ENCODE measurements at regions of chr11 and their contacts with region 1.

Region 1: DNA sequence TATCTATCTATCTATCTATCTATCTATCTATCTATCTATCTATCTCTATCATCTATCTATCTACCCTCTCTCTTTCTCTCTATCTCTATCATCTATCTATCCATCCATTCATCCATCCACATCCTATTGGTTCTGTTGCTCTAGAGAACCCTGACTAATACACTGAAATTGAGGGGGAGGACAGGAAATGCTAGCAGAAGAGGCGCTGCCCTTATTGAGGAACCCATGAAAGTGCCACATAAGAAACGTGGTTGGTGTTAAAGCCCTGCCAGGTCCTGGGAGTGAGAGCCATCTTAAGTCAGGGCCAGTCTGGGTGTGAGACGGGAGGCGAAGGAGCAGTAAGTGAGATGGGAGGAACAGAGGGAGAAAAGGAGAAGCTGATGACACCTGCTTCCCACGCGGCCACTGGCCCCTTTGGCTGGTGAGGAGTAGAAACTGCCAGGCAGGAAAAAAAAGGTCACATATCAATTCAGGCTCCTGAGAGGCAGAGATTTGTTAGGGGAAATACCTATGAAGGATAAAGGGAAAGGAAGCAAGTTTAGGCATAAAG is 87.9 kb upstream of the PLET1 start:
- DNase-seq: no peak
- ATAC-seq: peak; percentile 65
- H3K4me3 Mint-ChIP-seq: no peak overlapping the region
- H3K27ac Mint-ChIP-seq: no peak overlapping the region
- H3K4me1 Mint-ChIP-seq: peaks cover 6% of the 10 kb centered on the region
- H3K27me3 Mint-ChIP-seq: no peaks in the 10 kb centered on the region

Region 2: GRCh38 chr11:112302231-112302732 is 46.3 kb before region 1 on chr11:
- CTCF ChIA-PET with region 1: no interaction called
- POLR2A ChIA-PET with region 1: no interaction called
- intact Hi-C with region 1: no loop called
- DNase-seq: no peak
- ATAC-seq: no peak
- H3K4me3 Mint-ChIP-seq: no peak overlapping the region
- H3K27ac Mint-ChIP-seq: peak overlapping the region; percentile 51
- H3K4me1 Mint-ChIP-seq: peaks cover 26% of the 10 kb centered on the region
- H3K27me3 Mint-ChIP-seq: no peaks in the 10 kb centered on the region

Region 3: GRCh38 chr11:112318193-112318592 is 30.4 kb before region 1 on chr11:
- CTCF ChIA-PET with region 1: no interaction called
- POLR2A ChIA-PET with region 1: no interaction called
- intact Hi-C with region 1: loop called in 1 of 2 experiments (anchors 2 kb)
- DNase-seq: no peak
- ATAC-seq: no peak
- H3K4me3 Mint-ChIP-seq: no peak overlapping the region
- H3K27ac Mint-ChIP-seq: no peak overlapping the region
- H3K4me1 Mint-ChIP-seq: peaks cover 24% of the 10 kb centered on the region
- H3K27me3 Mint-ChIP-seq: no peaks in the 10 kb centered on the region

Measured in activated CD4-positive, alpha-beta T cell treated with anti-CD3 and anti-CD28 coated beads for 36 hours (primary cell).